Tibial artery (tissue), 4 donors: ENCODE measurements at regions of chr16 and their contacts with region 1.

Region 1: DNA sequence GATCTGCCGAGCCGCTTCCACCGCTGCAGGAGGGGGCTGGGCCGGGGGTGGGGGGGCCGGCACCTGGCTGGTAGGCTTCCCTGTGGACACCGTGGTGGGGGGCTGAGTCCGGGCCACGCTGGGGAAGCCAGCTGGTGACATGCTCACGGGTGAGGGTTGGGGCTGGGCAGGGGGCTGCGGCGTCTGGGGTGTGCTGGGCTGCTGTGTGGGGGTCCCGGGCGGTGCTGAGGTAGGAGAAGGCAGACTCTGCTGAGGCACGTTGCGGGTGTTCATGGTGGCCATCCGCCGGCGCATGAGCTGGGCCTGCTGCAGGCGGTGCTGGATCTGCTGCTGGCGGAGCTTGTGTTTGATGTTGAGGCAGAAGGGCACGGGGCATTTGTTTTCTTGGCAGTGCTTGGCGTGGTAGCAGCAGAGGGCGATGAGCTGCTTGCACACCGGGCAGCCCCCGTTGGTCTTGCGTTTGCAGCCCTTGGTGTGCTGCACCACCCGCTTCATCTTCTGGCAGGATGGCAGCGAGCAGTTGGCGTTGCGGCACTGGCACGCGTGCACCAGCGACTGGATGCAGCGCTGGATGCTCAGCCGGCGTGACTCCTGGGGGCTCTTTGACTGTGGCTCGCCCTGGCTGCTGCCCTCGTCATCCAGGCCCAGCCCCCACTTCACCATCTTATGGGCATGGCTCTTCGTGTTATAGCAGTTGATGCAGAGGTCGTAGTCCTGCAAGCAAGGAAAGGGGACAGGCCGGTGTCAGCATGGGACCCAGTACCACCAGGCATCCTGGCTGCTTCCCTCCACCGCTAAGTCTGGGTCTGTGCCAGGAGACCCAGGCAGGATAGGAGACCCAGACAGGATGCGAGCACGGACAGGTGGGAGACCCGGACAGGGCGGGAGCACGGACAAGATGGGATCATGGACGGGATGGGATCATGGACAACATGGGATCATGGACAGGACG is 12.1 kb upstream of the TRAP1 start:
- DNase-seq: no peak
- H3K4me3 ChIP-seq: no peak overlapping the region
- H3K27ac ChIP-seq: no peak overlapping the region
- H3K4me1 ChIP-seq: no peaks in the 10 kb centered on the region
- H3K27me3 ChIP-seq: no peaks in the 10 kb centered on the region
- CTCF ChIP-seq: no peak

Region 2: GRCh38 chr16:3690470-3690928 is 38.9 kb before region 1 on chr16:
- intact Hi-C with region 1: loop called (anchors 1 kb)
- DNase-seq: peak; percentile 96
- H3K4me3 ChIP-seq: peak overlapping the region; percentile 36 to 48
- H3K27ac ChIP-seq: peak overlapping the region; percentile 41 to 59
- H3K4me1 ChIP-seq: peaks cover 0 to 14% (median 6%) of the 10 kb centered on the region in 4 donors
- H3K27me3 ChIP-seq: no peaks in the 10 kb centered on the region
- CTCF ChIP-seq: peak; percentile 92 to 95